ENCODE measurements at regions of chr12 and their contacts with region 1.

Region 1: GRCh38 chr12:109775172-109775881 is 57.9 kb downstream of the TRPV4 start:
- DNase-seq: no peak
- ATAC-seq: peak; percentile 87
- H3K4me3 ChIP-seq: no peak overlapping the region
- H3K27ac ChIP-seq: no peak overlapping the region
- H3K4me1 ChIP-seq: no peaks in the 10 kb centered on the region
- H3K27me3 ChIP-seq: no peaks in the 10 kb centered on the region
- CTCF ChIP-seq: peak; percentile 88 to 94 (median 89)
- EP300 ChIP-seq: no peak
- POLR2A ChIP-seq: no peak
- RAD21 ChIP-seq: peak; percentile 89

Region 2: DNA sequence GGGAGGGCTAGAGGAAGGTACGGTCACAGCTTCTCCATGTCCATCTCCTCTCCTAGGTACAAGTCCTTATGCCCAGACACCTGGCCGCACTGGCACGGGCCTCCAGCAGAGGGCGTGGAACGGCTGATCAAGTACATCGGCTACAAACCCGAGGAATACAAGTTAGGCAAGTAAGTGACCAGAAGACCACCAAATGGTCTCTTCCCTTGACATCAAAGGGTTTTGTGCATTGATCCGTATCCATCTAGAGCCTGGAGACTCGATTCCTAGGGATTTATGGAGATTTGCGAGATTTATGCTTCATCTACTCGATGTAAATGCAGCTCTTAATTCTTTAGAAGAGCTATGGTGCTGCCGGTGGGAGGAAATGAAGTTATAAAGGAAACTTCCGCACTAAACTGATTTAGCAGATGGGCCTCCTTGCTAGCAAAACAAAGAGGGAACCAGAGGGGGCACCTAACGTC is 342.5 kb before region 1 on chr12:
- CTCF ChIA-PET with region 1: interaction called, 9 read pairs
- POLR2A ChIA-PET with region 1: no interaction called
- RAD21 ChIA-PET with region 1: interaction called, 5 read pairs
- SMC1A ChIA-PET with region 1: interaction called, 4 read pairs
- in situ Hi-C with region 1: loop called (anchors 5 kb)
- intact Hi-C with region 1: loop called (anchors 1 kb)
- DNase-seq: no peak
- ATAC-seq: peak; percentile 92
- H3K4me3 ChIP-seq: no peak overlapping the region
- H3K27ac ChIP-seq: no peak overlapping the region
- H3K4me1 ChIP-seq: no peaks in the 10 kb centered on the region; the same call in 1 of the 2 replicates
- H3K27me3 ChIP-seq: no peaks in the 10 kb centered on the region
- CTCF ChIP-seq: peak; percentile 81 to 97 (median 94)
- EP300 ChIP-seq: no peak
- POLR2A ChIP-seq: no peak
- RAD21 ChIP-seq: peak; percentile 46

Region 3: GRCh38 chr12:109518820-109519665 is 256.3 kb before region 1 on chr12:
- CTCF ChIA-PET with region 1: interaction called, 56 read pairs
- POLR2A ChIA-PET with region 1: no interaction called
- RAD21 ChIA-PET with region 1: interaction called, 3 read pairs
- SMC1A ChIA-PET with region 1: interaction called, 10 read pairs
- in situ Hi-C with region 1: loop called (anchors 5 kb)
- intact Hi-C with region 1: loop called (anchors 1 kb)
- DNase-seq: no peak
- ATAC-seq: peak; percentile 83
- H3K4me3 ChIP-seq: no peak overlapping the region
- H3K27ac ChIP-seq: no peak overlapping the region
- H3K4me1 ChIP-seq: no peaks in the 10 kb centered on the region
- H3K27me3 ChIP-seq: no peaks in the 10 kb centered on the region
- CTCF ChIP-seq: peak; percentile 71 to 81 (median 80)
- EP300 ChIP-seq: no peak
- POLR2A ChIP-seq: no peak
- RAD21 ChIP-seq: peak; percentile 56

Region 4: DNA sequence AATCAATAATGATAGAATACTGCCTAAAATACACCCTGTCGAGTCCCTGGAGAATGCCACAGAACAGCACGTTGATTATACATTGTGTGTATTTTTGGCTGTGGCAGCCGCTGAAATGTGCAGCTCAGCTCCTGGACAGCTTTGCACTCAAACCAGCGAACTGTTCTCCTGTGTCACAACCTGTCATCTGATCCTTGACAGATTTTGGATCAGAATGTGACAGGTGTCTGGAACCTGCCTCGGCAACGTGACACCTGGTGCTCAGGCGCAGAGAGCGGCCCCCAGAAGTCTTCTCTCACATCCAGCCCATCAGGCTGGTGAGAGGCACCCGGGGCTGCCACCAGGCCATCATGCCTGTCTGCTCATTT is 182.4 kb before region 1 on chr12:
- CTCF ChIA-PET with region 1: interaction called, 24 read pairs
- POLR2A ChIA-PET with region 1: no interaction called
- RAD21 ChIA-PET with region 1: interaction called, 16 read pairs
- SMC1A ChIA-PET with region 1: interaction called, 14 read pairs
- in situ Hi-C with region 1: loop called (anchors 5 kb)
- intact Hi-C with region 1: loop called (anchors 1 kb)
- DNase-seq: no peak
- ATAC-seq: no peak
- H3K4me3 ChIP-seq: no peak overlapping the region
- H3K27ac ChIP-seq: no peak overlapping the region
- H3K4me1 ChIP-seq: peaks cover 4% of the 10 kb centered on the region; the same call in 1 of the 2 replicates
- H3K27me3 ChIP-seq: no peaks in the 10 kb centered on the region
- CTCF ChIP-seq: no peak
- EP300 ChIP-seq: no peak
- POLR2A ChIP-seq: no peak
- RAD21 ChIP-seq: no peak

Region 5: DNA sequence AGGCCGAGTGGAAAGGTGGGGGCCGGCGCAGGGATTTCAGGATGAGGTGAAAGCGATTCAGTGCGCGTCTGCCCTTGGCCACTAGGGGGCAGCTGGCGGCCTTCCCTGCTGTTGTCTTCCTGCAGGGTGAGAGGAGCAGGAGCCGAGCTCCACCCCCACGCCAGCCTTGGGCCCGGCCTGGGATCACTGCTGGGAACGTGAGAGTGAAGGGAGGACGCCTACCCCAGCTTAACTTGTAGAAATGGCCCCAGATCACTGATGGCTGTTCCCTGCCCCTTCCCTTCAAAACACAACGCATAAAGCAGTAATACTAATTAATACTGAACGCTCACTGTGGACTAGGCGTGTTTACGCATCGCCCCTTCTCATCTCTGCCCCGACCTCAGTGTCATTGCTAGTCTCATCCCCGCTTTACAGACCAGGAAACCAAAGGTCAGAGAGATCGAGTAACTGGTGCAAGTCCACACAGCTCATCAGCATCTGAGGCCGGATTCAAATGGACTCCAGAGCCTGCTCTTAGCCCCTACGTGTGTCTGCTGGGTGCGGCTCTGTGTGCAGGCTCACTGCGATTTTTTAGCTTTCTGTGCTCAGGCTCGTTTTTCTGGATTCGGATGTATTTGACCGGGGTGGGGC is 177.4 kb before region 1 on chr12:
- CTCF ChIA-PET with region 1: interaction called, 24 read pairs
- POLR2A ChIA-PET with region 1: no interaction called
- RAD21 ChIA-PET with region 1: interaction called, 16 read pairs
- SMC1A ChIA-PET with region 1: interaction called, 14 read pairs
- in situ Hi-C with region 1: loop called (anchors 5 kb)
- intact Hi-C with region 1: loop called (anchors 1 kb)
- DNase-seq: no peak
- ATAC-seq: peak; percentile 89
- H3K4me3 ChIP-seq: no peak overlapping the region
- H3K27ac ChIP-seq: no peak overlapping the region
- H3K4me1 ChIP-seq: peaks cover 4% of the 10 kb centered on the region; the same call in 1 of the 2 replicates
- H3K27me3 ChIP-seq: no peaks in the 10 kb centered on the region
- CTCF ChIP-seq: peak; percentile 77 to 98 (median 94)
- EP300 ChIP-seq: no peak
- POLR2A ChIP-seq: 0 out of 2 replicates have a peak, but pooled peaks have one; percentile 27
- RAD21 ChIP-seq: peak; percentile 63

Region 6: GRCh38 chr12:109888179-109889020 is 113.1 kb after region 1 on chr12:
- CTCF ChIA-PET with region 1: no interaction called
- POLR2A ChIA-PET with region 1: no interaction called
- RAD21 ChIA-PET with region 1: no interaction called
- SMC1A ChIA-PET with region 1: no interaction called
- in situ Hi-C with region 1: no loop called
- intact Hi-C with region 1: no loop called
- DNase-seq: peak; percentile 45
- ATAC-seq: peak; percentile 63
- H3K4me3 ChIP-seq: no peak overlapping the region
- H3K27ac ChIP-seq: peak overlapping the region; percentile 86
- H3K4me1 ChIP-seq: peaks cover 45% of the 10 kb centered on the region
- H3K27me3 ChIP-seq: no peaks in the 10 kb centered on the region
- CTCF ChIP-seq: no peak
- EP300 ChIP-seq: no peak
- POLR2A ChIP-seq: no peak
- RAD21 ChIP-seq: no peak

Measured in GM12878 (cell line).